Activated CD4-positive, alpha-beta T cell treated with anti-CD3 and anti-CD28 coated beads for 36 hours (primary cell): ENCODE measurements at regions of chr17 and their contacts with region 1.

Region 1: DNA sequence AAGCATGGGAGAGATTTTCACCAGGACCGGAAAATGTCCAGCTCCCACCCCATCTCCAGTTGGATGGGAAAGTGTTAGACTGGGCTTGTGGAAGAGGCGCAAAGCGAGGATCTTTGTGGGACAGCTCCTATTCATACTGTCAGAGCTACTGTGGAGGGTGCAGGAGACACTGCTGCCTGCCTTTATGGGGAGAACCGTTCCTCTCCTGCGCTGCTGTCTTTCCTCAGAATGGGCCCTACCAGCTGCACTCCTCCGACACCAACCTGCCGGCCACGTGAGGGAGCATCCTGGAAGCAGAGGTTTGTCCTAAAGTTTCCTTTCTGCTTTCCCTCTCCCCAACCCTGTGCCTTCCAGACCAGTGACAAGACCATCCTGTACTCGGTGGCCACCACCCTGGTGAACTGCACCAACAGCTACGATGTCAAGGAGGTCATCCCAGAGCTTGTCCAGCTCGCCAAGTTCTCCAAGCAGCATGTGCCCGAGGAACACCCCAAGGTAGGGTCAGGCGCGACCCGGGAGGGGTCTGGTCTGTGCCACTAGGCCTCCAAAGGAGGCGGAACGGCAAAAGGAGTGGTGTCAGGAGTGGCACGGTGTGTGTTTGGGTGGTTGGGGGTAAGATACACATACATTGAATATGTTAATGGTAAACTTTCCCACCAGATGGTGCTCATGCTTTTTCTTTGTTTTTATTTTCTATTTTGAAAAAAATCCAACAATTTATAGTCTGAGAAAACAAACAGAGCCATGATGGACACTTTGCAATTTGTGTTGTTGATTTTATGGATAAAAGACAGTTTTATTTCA is 23.0 kb downstream of the SLC35G3 start:
- DNase-seq: peak; percentile 32
- ATAC-seq: peak; percentile 76
- H3K4me3 Mint-ChIP-seq: no peak overlapping the region
- H3K27ac Mint-ChIP-seq: peak overlapping the region; percentile 47
- H3K4me1 Mint-ChIP-seq: peaks cover 39% of the 10 kb centered on the region
- H3K27me3 Mint-ChIP-seq: no peaks in the 10 kb centered on the region

Region 2: GRCh38 chr17:35254107-35254802 is 83.1 kb after region 1 on chr17:
- CTCF ChIA-PET with region 1: no interaction called
- POLR2A ChIA-PET with region 1: no interaction called
- intact Hi-C with region 1: no loop called
- DNase-seq: no peak
- ATAC-seq: no peak
- H3K4me3 Mint-ChIP-seq: no peak overlapping the region
- H3K27ac Mint-ChIP-seq: peak overlapping the region; percentile 52
- H3K4me1 Mint-ChIP-seq: peaks cover 75% of the 10 kb centered on the region
- H3K27me3 Mint-ChIP-seq: no peaks in the 10 kb centered on the region

Region 3: GRCh38 chr17:35291802-35292201 is 120.6 kb after region 1 on chr17:
- CTCF ChIA-PET with region 1: no interaction called
- POLR2A ChIA-PET with region 1: no interaction called
- intact Hi-C with region 1: loop called in 1 of 2 experiments (anchors 5 kb)
- DNase-seq: no peak
- ATAC-seq: peak; percentile 53
- H3K4me3 Mint-ChIP-seq: no peak overlapping the region
- H3K27ac Mint-ChIP-seq: no peak overlapping the region
- H3K4me1 Mint-ChIP-seq: peaks cover 20% of the 10 kb centered on the region
- H3K27me3 Mint-ChIP-seq: no peaks in the 10 kb centered on the region